Activated B cell treated with CpG ODN at 0.5 μM for 24 hours (primary cell): ENCODE measurements at regions of chr13 and their contacts with region 1.

Region 1: GRCh38 chr13:26498656-26499591 is 58.6 kb upstream of the WASF3 start:
- DNase-seq: no peak
- ATAC-seq: no peak
- H3K4me3 Mint-ChIP-seq: no peak overlapping the region
- H3K27ac Mint-ChIP-seq: no peak overlapping the region
- H3K4me1 Mint-ChIP-seq: no peaks in the 10 kb centered on the region
- H3K27me3 Mint-ChIP-seq: peaks cover 4% of the 10 kb centered on the region
- CTCF ChIP-seq: no peak

Region 2: DNA sequence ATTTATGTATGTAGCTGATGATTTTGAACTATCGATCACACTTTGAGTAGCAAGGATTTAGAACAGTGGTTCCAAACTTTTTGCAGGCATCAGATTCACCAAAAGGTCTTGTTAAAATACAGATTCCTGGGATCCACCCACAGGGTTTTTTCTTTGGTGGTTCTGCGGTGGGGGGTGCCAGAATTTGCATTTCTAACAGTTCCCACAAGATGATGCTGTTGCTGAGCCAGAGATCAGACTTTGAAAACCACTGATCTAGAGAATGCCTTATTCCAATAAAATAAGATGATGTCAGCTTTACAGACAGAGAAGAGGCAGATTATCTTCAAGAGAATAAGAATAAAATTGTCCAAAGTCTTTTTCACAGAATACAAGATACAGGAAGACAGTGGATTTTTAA is 366.2 kb before region 1 on chr13:
- CTCF ChIA-PET with region 1: no interaction called
- POLR2A ChIA-PET with region 1: no interaction called
- intact Hi-C with region 1: loop called (anchors 1 kb)
- DNase-seq: no peak
- ATAC-seq: no peak
- H3K4me3 Mint-ChIP-seq: no peak overlapping the region
- H3K27ac Mint-ChIP-seq: no peak overlapping the region
- H3K4me1 Mint-ChIP-seq: peaks cover 3% of the 10 kb centered on the region
- H3K27me3 Mint-ChIP-seq: peaks cover 4% of the 10 kb centered on the region
- CTCF ChIP-seq: no peak

Region 3: DNA sequence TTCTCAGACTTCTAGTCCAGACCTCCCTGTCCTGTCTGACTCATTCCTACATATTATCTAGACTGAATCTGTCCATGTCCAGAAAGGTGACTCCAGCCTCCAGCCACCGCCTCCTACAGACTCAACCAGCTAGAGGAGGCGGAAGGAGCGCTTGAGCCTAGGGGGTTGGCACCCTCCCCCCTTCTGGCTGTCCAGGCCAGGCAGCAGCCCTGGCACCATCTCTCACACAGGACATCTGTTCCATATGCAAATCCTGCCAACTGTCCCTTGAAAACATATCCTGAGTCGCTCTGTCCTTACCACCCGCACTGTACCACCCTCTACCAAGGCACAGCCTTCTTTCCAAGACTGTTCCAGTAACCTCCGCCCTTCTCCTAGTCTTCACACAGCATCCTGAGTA is 92.1 kb before region 1 on chr13:
- CTCF ChIA-PET with region 1: no interaction called
- POLR2A ChIA-PET with region 1: no interaction called
- intact Hi-C with region 1: no loop called
- DNase-seq: no peak
- ATAC-seq: no peak
- H3K4me3 Mint-ChIP-seq: no peak overlapping the region
- H3K27ac Mint-ChIP-seq: no peak overlapping the region
- H3K4me1 Mint-ChIP-seq: no peaks in the 10 kb centered on the region
- H3K27me3 Mint-ChIP-seq: no peaks in the 10 kb centered on the region
- CTCF ChIP-seq: no peak

Region 4: DNA sequence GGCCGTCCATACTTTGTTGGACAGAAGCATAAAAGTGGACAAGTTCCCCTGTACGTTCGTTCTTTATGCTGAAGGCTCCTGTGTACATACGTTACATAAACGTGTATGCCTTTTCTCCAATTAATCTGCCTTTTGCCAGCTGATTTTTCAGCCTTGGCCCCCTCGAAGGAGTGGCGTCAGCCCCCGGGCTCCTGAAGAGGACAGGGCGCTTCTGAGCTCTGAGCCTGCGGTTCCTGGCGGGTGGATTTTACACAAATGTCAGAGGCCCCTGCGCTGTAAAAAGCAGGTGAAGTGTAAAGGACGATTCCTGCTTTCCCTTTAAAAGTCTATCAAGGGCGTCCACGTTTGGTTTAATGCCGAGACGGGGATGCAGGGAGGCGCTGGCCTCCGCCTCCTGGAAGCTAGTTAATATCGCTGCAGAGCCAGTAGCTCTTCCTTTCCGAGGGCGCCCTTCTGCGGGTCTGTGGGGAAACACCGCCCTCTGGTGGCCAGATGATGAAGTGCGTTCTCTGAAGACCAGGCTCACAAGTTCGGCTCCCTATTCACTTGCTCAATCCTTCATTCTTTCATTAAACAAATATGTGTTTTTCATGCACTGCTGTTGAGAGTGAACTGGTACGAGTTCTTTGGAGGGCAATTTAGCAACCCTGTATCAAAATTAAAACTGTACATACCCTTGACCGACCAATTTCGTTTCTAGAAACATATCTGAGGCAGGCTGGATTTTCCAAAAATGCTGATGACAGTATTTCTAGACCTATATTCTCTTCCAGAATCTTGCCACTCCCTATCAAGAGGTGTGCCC is 199.7 kb after region 1 on chr13:
- CTCF ChIA-PET with region 1: no interaction called
- POLR2A ChIA-PET with region 1: no interaction called
- intact Hi-C with region 1: loop called (anchors 5 kb)
- DNase-seq: peak; percentile 72
- ATAC-seq: peak; percentile 87
- H3K4me3 Mint-ChIP-seq: no peak overlapping the region
- H3K27ac Mint-ChIP-seq: no peak overlapping the region
- H3K4me1 Mint-ChIP-seq: peaks cover 4% of the 10 kb centered on the region
- H3K27me3 Mint-ChIP-seq: peaks cover 7% of the 10 kb centered on the region
- CTCF ChIP-seq: peak; percentile 30